ENCODE measurements at regions of chr12 and their contacts with region 1.

Region 1: DNA sequence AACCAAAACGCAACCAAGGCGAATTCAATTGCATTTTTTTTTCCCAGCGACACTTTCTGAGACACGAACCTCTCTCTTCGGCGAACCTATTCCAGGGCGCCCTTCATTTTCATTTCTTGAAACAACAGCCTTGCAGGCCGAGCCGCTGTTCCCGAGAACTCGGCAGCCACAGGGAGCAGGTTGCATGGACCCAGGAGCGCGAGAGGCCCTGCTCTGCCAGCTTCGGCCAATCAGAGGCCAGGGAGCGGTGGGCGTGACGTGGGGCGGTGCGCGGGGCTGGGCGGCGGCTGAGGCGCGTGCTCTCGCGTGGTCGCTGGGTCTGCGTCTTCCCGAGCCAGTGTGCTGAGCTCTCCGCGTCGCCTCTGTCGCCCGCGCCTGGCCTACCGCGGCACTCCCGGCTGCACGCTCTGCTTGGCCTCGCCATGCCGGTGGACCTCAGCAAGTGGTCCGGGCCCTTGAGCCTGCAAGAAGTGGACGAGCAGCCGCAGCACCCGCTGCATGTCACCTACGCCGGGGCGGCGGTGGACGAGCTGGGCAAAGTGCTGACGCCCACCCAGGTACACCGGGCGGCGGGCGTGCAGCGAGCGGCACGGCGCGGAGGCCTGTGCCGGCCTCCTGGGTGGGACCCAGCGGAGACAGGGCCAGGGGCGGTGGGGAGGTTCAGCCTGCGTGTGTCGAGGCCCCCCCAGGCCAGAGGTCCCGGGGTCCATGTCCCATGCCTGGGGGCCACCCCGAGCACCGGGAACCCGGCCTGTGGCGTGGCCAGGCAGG is at the start of gene PEBP1:
- DNase-seq: peak; percentile 85 to 94 (median 89)
- ATAC-seq: peak; percentile 100
- H3K4me3 ChIP-seq: peak within 1 kb of the TSS; percentile 76
- H3K4me3 Mint-ChIP-seq: peak within 1 kb of the TSS; percentile 86 to 99 (median 97)
- H3K27ac ChIP-seq: peak within 1 kb of the TSS; percentile 83
- H3K27ac Mint-ChIP-seq: peak within 1 kb of the TSS; percentile 84 to 96 (median 91)
- H3K4me1 ChIP-seq: peaks cover 6 to 17% of the 10 kb centered on the region in 2 donors
- H3K4me1 Mint-ChIP-seq: peaks cover 7 to 46% (median 37%) of the 10 kb centered on the region in 7 donors
- H3K27me3 ChIP-seq: no peaks in the 10 kb centered on the region
- H3K27me3 Mint-ChIP-seq: no peaks in the 10 kb centered on the region
- total RNA-seq, gene PEBP1: 73.8 to 109 (median 91.1) TPM

Region 2: DNA sequence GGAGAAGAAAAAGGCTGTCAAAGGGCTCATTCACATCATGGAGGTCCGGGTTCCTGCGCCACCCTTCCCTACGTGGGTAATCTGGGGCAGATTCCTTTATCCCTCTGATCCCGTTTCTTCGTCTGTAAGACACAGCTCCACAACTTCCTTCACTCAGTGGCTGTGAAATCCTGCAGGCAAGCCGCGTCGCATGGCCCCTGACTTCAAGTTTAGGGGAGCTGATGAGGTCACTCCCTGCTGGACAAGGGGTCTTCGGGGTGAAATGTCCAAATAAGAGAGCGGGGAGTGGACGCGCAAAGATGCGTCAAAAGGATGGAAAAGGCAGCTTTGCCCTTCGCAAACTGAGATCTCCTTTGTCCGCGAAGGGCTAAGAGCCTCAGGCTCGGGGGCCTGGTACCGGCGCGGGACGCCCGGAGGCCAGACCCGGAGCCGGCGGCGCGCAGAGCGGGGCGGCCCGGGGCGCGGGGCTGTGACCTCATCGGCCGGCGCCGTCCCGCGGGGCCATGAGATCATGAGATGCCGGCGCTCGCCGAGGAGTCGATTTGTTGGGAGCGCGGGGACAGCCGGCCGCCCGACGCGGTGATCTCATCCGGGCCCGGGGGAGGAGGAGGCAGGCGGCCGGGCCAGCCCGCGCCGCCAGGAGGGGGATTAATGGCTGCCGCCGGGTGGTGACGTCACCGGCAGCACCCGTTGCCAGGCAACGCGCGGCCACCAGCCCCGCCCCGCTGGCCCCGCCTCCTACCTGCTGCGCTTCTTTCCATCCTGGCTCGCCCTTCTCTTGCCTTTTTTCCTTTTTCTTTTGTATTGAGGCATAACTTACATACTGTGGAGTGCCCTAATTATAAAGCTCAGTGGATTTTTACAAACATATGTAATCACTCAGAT is 1316.8 kb before region 1 on chr12:
- CTCF ChIA-PET with region 1: no interaction called
- POLR2A ChIA-PET with region 1: no interaction called
- intact Hi-C with region 1: loop called in 1 of 2 experiments (anchors 2 kb)
- DNase-seq: peak; percentile 86 to 94 (median 91)
- ATAC-seq: peak; percentile 90
- H3K4me3 ChIP-seq: peak overlapping the region; percentile 99
- H3K4me3 Mint-ChIP-seq: peak overlapping the region; percentile 78 to 99 (median 94)
- H3K27ac ChIP-seq: peak overlapping the region; percentile 97
- H3K27ac Mint-ChIP-seq: peak overlapping the region; percentile 87 to 99 (median 96)
- H3K4me1 ChIP-seq: peaks cover 7 to 11% of the 10 kb centered on the region in 2 donors
- H3K4me1 Mint-ChIP-seq: peaks cover 12 to 31% (median 24%) of the 10 kb centered on the region in 7 donors
- H3K27me3 ChIP-seq: no peaks in the 10 kb centered on the region
- H3K27me3 Mint-ChIP-seq: no peaks in the 10 kb centered on the region

Region 3: DNA sequence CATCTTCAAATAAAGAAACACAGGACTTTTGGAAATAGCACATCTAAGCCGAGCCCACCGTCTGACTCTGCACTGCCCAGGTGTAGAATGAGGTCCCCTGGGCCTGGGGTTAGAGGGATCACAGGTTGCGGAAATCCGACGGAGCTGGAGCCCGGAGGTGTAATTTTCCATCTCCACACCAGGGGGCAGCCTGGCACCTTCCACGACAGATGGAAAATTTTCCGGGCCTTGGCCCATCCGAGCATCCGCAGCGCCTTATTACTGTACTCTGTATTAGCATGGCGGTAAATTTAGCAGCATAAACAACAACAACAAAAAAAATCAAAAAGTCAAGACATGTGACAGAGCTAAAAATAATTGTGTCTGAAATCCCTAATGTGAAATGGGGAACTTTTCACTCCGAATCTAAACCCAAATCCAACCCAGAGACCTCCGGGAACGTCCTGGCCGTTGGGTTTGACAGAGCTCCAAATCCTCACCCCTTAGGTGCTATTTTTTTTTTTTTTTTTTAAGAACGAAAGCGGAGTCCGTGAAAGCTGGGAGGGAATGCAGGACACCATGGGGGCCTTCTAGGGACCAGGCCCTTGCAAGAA is 261.0 kb before region 1 on chr12:
- CTCF ChIA-PET with region 1: no interaction called
- POLR2A ChIA-PET with region 1: no interaction called
- intact Hi-C with region 1: loop called in 1 of 2 experiments (anchors 10 kb)
- DNase-seq: peak; percentile 10 to 70 (median 39)
- ATAC-seq: peak; percentile 69
- H3K4me3 ChIP-seq: no peak overlapping the region
- H3K4me3 Mint-ChIP-seq: peak overlapping the region in 1 of 10 donors; percentile 30
- H3K27ac ChIP-seq: no peak overlapping the region
- H3K27ac Mint-ChIP-seq: peak overlapping the region in 1 of 9 donors; percentile 34
- H3K4me1 ChIP-seq: peaks cover 0 to 4% of the 10 kb centered on the region in 2 donors
- H3K4me1 Mint-ChIP-seq: peaks cover 0 to 6% (median 4%) of the 10 kb centered on the region in 7 donors
- H3K27me3 ChIP-seq: peaks cover 0 to 3% of the 10 kb centered on the region in 2 donors
- H3K27me3 Mint-ChIP-seq: peaks cover 20 to 34% (median 26%) of the 10 kb centered on the region in 5 donors

Region 4: DNA sequence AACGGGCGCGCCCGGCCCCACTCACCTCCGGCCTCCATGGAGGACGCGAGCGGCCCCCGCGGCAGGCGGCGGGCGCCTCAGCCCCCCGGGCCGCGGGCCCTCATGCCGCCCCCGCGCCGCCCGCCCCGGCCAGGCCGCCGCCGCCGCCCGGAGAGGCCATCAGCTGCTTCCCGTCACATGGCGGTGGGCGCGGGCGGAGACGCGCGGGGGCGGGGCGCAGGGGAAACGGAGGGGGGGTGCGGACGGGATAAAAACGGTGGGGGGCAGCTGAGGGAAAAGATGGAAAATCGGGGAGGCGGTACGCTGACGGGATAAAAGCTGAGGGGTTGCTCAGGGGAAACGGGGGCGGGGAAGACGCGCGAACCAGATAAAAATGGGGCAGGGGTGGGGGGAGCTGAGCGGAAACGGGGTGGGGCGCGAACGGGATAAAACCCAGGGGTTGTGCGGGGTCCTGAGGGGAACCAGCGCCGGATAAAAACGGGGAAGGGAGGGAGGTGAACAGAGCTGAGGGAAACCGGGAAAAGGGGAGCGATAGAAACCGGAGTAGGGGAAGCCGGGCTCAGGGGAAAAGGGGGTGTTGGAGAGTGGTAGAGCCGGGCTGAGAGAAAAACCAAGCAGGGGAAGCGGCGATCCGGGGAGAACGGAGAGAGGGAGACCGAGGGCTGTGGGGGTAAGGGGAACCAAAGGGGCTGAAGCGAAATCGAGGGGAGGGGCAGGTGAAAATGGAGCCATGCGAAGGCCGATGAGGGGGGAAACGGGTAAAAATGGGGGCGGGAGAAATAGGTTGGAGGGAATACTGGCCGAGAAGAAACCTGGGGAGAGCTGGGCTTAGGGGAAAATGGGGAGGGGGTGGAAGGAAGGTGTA is 74.7 kb before region 1 on chr12 and contains the start of gene WSB2:
- CTCF ChIA-PET with region 1: interaction called, 5 read pairs
- POLR2A ChIA-PET with region 1: interaction called, 6 read pairs
- intact Hi-C with region 1: loop called (anchors 1 kb)
- DNase-seq: peak; percentile 24 to 81 (median 39)
- ATAC-seq: peak; percentile 53
- H3K4me3 ChIP-seq: peak within 1 kb of the TSS; percentile 88
- H3K4me3 Mint-ChIP-seq: peak within 1 kb of the TSS; percentile 88 to 100 (median 96)
- H3K27ac ChIP-seq: peak within 1 kb of the TSS; percentile 80
- H3K27ac Mint-ChIP-seq: peak within 1 kb of the TSS; percentile 92 to 98 (median 94)
- H3K4me1 ChIP-seq: peaks cover 13 to 32% of the 10 kb centered on the region in 2 donors
- H3K4me1 Mint-ChIP-seq: peaks cover 44 to 65% (median 57%) of the 10 kb centered on the region in 7 donors
- H3K27me3 ChIP-seq: no peaks in the 10 kb centered on the region
- H3K27me3 Mint-ChIP-seq: no peaks in the 10 kb centered on the region
- total RNA-seq, gene WSB2: 12.2 to 52.2 (median 19.1) TPM

Region 5: DNA sequence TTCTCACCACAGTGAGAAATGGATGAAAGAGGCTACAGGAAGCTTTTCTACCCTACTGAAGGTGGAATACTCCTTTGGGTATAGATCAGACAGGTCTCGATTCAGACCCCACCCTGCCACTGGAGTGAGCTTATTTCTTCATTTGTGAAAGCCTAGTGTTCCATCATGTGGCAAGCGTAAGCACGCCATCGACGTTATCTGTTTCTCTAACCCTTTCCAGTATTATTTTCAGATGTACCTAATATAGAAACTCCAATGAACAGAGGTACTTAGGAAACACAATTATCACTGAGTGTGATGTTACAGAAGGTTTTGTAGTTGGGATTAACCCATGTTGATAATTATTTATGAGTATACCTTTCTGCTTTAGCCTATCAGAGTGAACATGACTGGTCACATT is 12.3 kb after region 1 on chr12:
- CTCF ChIA-PET with region 1: no interaction called
- POLR2A ChIA-PET with region 1: interaction called, 12 read pairs
- intact Hi-C with region 1: no loop called
- DNase-seq: no peak
- ATAC-seq: no peak
- H3K4me3 ChIP-seq: no peak overlapping the region
- H3K4me3 Mint-ChIP-seq: no peak overlapping the region
- H3K27ac ChIP-seq: no peak overlapping the region
- H3K27ac Mint-ChIP-seq: no peak overlapping the region
- H3K4me1 ChIP-seq: no peaks in the 10 kb centered on the region
- H3K4me1 Mint-ChIP-seq: peaks cover 0 to 2% (median under 1%) of the 10 kb centered on the region in 7 donors
- H3K27me3 ChIP-seq: no peaks in the 10 kb centered on the region
- H3K27me3 Mint-ChIP-seq: no peaks in the 10 kb centered on the region

Region 6: GRCh38 chr12:118520214-118521035 is 384.5 kb after region 1 on chr12:
- CTCF ChIA-PET with region 1: no interaction called
- POLR2A ChIA-PET with region 1: no interaction called
- intact Hi-C with region 1: no loop called
- DNase-seq: no peak
- ATAC-seq: no peak
- H3K4me3 ChIP-seq: no peak overlapping the region
- H3K4me3 Mint-ChIP-seq: no peak overlapping the region
- H3K27ac ChIP-seq: no peak overlapping the region
- H3K27ac Mint-ChIP-seq: no peak overlapping the region
- H3K4me1 ChIP-seq: no peaks in the 10 kb centered on the region
- H3K4me1 Mint-ChIP-seq: no peaks in the 10 kb centered on the region
- H3K27me3 ChIP-seq: no peaks in the 10 kb centered on the region
- H3K27me3 Mint-ChIP-seq: peaks cover 0 to 11% (median 4%) of the 10 kb centered on the region in 5 donors